ENCODE measurements at regions of chr12 and their contacts with region 1.

Region 1: GRCh38 chr12:13211859-13212664 is 15.5 kb downstream of the EMP1 start:
- DNase-seq: peak; percentile 50
- CTCF ChIP-seq: peak; percentile 83

Region 2: GRCh38 chr12:12786716-12787601 is 425.1 kb before region 1 on chr12:
- CTCF ChIA-PET with region 1: interaction called, 23 read pairs
- POLR2A ChIA-PET with region 1: no interaction called
- DNase-seq: peak; percentile 96
- CTCF ChIP-seq: peak; percentile 2

Region 3: DNA sequence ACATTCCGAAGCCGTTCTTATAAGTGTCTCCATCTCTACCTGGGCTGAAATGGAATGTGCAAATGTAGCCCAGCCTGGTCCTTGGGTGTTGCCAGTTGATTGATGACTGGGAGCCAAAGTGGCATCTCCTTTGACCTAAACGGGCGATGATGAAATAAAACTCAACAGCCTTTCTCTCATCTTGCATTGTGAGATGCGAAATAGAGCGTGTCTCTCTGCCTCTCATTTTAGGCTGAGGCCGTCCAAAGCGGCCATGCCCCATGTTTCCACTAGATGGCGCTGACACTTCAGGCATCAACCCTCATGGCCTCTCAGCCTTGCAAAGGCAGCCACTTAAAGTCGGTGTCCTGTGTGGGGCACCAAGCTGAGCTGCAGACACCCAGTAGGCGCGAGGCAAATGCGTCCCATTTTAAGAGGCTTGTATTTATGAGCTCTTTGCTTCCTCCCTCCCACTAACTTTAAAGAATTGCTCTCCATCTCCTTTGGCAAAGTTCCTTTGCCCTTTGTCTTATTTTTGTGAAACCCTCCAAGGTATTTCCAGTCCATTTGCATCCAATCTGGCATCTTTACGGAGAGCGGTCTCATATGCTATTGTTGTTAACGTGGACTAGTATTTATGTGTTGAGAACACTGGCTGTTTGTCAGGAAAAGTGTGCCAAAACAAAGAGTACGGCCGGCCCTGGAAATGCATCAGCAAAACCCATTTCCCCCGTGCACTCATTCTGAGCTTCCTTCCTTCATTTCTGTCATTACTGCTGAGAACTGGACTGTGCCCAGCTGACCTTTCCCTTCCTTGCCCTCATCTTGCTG is 295.7 kb before region 1 on chr12:
- CTCF ChIA-PET with region 1: interaction called, 117 read pairs
- POLR2A ChIA-PET with region 1: no interaction called
- DNase-seq: peak; percentile 82
- CTCF ChIP-seq: peak; percentile 96

Region 4: DNA sequence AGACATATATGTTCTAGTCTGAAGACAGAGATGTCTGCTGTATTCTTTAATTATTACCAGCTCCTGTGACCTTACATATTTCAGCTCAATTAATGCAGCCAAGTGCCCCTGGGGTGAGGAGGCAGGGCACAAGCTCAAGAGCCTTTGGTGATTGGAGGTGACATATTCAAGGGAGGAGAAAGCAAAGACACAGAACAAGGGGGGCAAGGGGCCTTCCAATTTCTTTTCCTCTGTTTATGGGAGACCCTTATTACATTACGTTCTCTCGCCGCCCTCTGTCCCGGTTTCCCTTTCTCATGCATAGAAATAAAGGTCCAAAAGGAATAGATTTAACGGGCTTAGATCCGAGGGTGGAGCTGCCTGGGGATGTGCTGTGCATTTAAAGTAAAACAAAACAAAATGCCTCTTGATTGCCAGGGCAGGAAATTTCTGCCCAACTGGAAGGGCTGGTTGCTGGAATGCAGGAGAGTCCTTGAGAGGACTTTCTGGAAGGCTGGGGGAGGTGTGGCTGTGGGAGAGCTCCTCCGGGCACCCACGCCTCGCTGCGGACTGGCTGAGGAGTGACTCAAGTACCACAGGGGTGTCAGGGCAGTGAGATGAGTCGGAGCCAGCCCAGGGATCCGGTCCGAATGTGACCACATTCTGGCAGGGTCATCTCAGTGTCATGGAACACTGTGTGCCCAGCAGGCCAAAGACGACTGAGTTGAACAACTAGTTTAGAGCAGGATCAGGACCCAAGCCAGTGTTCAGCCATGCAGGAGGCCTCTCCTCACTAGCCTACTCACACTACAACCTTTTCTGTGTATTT is 76.5 kb before region 1 on chr12:
- CTCF ChIA-PET with region 1: no interaction called
- POLR2A ChIA-PET with region 1: no interaction called
- DNase-seq: no peak
- CTCF ChIP-seq: no peak

Region 5: DNA sequence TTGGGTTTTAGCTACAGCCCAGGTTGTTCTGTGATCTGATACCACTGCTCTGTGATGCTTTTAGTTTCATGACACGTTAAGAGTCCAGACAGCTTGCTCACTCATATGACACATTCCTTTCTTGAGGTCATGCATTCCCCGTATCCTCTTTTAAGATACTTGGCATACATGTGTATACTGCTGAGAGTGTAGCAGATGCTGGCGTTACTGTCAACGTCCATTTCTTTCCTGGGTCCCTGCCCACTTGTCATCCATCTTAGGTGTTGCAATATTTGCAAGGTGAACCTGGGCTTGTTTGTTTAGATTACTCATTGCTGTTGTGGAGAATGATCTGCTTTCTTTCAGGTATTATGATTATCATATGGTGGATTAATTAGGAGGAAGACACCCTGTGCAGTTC is 24.7 kb before region 1 on chr12:
- CTCF ChIA-PET with region 1: interaction called, 15 read pairs
- POLR2A ChIA-PET with region 1: no interaction called
- DNase-seq: no peak
- CTCF ChIP-seq: no peak

Region 6: GRCh38 chr12:13223179-13223859 is 11.3 kb after region 1 on chr12:
- CTCF ChIA-PET with region 1: interaction called, 21 read pairs
- POLR2A ChIA-PET with region 1: no interaction called
- DNase-seq: no peak
- CTCF ChIP-seq: no peak

Region 7: DNA sequence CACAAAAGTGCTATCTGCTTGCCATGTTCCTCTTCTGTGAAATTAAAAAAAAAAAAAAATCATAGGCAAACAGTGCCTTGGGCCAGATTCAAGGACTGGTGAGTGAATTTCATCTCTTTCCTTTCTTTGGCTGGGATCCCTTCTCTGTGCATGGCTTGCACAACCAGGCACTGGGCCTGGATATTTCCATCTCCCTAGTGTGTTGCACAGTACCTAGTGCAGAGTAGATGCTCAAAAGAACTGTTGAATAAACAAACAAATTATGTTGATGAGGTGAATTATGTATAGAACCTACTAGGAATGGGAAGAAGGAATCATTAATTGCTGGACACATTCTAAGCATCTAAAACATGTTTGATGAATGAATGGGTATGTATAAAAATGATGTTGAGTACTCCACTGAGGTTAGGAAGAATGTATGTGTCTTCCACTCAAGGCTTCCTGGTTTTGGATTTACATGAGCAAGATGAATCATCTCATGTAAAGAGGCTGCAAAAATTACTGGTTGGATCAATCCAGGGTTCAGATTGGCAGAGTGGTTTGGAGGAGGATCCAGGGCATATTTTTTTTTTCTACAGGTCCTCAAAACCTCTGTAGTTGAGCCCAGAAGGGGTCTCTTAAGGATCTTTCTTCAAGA is 77.7 kb after region 1 on chr12:
- CTCF ChIA-PET with region 1: no interaction called
- POLR2A ChIA-PET with region 1: no interaction called
- DNase-seq: no peak
- CTCF ChIP-seq: no peak